ENCODE measurements at regions of chr5 and their contacts with region 1.

Region 1: GRCh38 chr5:157342822-157343402 is 77.0 kb downstream of the CYFIP2 start:
- DNase-seq: peak; percentile 51
- H3K4me3 Mint-ChIP-seq: no peak overlapping the region
- H3K27ac Mint-ChIP-seq: no peak overlapping the region
- H3K4me1 Mint-ChIP-seq: peaks cover 38% of the 10 kb centered on the region
- H3K27me3 Mint-ChIP-seq: no peaks in the 10 kb centered on the region

Region 2: GRCh38 chr5:157294407-157295091 is 48.4 kb before region 1 on chr5:
- CTCF ChIA-PET with region 1: no interaction called
- intact Hi-C with region 1: no loop called
- DNase-seq: no peak
- H3K4me3 Mint-ChIP-seq: no peak overlapping the region
- H3K27ac Mint-ChIP-seq: peak overlapping the region; percentile 61
- H3K4me1 Mint-ChIP-seq: peaks cover 55% of the 10 kb centered on the region
- H3K27me3 Mint-ChIP-seq: no peaks in the 10 kb centered on the region

Region 3: DNA sequence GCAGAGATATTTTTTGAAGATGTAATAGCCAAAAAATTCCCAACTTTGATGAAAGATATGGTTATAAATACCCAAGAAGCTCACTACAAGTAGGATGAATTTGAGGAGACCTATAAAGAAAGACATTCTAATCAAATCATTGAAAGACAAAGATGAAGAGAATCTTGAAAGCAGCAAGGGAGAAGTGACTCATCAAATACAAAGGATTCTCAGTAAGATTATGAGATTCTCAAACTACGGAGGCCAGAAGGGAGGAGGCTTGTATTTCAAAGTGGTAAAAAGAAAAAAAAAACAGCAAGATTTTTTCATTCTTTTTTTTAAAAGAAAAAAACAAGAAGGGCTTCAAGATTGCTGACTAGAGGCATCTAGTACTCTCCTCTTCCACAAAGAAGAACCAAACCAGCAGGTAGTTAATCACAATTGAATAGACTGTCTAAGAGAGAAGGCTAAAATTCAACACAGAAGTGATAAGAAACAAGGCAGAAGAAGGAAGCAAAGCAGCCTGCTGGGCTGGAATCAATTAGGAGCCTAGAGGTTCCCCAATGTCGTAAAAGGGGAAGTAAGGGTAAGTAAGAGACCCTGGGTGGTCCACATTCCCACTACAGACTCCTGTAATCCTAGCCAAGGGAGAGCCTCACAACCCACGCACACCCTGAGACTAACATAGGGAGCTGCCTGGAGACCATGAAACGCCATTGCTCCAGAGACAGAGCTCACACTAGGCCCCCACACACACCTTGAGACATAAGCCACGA is 58.0 kb after region 1 on chr5:
- CTCF ChIA-PET with region 1: no interaction called
- intact Hi-C with region 1: no loop called
- DNase-seq: no peak
- H3K4me3 Mint-ChIP-seq: no peak overlapping the region
- H3K27ac Mint-ChIP-seq: no peak overlapping the region
- H3K4me1 Mint-ChIP-seq: peaks cover 10% of the 10 kb centered on the region
- H3K27me3 Mint-ChIP-seq: no peaks in the 10 kb centered on the region

Region 4: DNA sequence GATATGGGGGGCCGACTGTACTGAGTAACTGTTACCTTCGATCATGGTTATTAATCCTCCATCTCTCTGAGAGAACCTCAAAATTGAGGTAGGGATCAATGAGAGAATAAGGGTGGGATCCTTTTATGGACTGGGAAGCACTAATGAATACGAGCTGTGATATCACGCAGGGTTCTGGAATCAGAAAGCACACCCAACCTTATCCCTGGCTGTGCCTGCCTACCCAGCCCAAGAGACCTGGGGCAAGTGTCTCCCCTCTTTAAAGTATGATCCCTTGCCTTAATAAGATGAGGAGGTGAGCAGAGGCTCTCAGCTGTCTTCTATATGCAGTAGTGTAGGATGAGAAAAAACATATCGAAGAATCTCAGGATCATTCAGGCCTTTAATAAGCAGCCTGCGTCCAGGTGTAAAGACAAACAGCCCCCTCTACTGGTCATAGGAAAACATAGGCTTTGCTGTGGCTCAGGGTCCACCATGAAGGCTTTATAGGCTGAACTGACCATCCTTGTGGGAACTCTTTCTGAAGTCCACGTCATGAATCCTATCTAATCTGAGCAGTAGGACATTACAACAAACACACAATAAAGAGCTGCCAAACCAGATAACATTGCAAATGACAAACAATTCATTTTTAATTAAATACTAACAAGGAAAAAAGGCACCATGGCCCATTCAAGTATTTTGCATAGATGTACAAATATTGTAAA is 133.9 kb after region 1 on chr5:
- CTCF ChIA-PET with region 1: interaction called, 19 read pairs
- intact Hi-C with region 1: loop called (anchors 1 kb)
- DNase-seq: peak; percentile 59
- H3K4me3 Mint-ChIP-seq: no peak overlapping the region
- H3K27ac Mint-ChIP-seq: no peak overlapping the region
- H3K4me1 Mint-ChIP-seq: no peaks in the 10 kb centered on the region
- H3K27me3 Mint-ChIP-seq: no peaks in the 10 kb centered on the region

Measured in activated naive CD4-positive, alpha-beta T cell treated with anti-CD3 and anti-CD28 coated beads for 36 hours (primary cell).